ENCODE measurements at regions of chr15 and their contacts with region 1.

Region 1: DNA sequence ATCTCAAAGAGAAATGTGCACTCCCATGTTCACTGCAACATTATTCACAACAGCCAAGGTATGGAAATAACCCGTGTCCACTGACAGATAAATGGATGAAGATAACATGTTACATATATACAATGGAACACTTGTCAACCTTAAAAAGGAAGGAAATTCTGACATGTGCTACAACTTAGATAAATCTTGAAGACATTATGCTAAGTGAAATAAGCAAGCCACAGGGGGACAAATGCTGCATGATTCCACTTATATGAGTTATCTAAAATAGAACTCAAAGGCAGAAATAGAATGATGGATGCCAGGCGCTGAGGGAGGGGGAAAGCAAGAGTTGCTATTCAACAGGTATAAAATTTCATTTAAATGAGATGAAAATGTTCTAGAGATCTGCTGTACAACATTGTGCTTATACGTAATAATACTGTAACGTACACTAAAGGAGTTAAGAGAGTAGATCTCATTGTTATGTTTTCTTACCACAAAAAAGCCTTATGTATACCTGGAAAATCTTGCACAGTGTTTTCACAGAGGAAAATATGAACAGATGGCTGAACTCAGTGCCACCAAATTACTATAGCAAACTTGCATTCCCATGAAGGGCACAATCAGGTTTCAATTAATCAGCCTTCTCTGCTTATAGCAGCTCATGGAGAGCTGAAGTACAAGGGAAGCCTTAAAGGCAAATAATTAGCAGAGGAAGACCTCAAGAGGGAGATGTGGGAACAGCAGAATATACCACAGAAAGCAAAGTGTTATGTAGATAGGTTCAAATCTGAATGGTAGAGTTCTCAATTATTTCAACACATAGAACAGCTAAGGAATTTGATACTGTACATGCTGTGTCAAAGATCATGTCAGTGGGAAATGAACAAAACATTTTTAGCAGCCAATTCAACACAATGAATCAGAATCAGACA is 8.1 kb upstream of the VPS39 start:
- DNase-seq: no peak
- H3K4me3 ChIP-seq: no peak overlapping the region
- H3K27ac ChIP-seq: no peak overlapping the region
- H3K4me1 ChIP-seq: no peaks in the 10 kb centered on the region
- H3K27me3 ChIP-seq: no peaks in the 10 kb centered on the region
- CTCF ChIP-seq: no peak
- POLR2A ChIP-seq: no peak

Region 2: GRCh38 chr15:40412095-40412759 is 1803.9 kb before region 1 on chr15:
- intact Hi-C with region 1: loop called (anchors 10 kb)
- DNase-seq: peak in 1 of 2 donors; percentile 44
- H3K4me3 ChIP-seq: no peak overlapping the region
- H3K27ac ChIP-seq: no peak overlapping the region
- H3K4me1 ChIP-seq: no peaks in the 10 kb centered on the region
- H3K27me3 ChIP-seq: no peaks in the 10 kb centered on the region
- CTCF ChIP-seq: no peak
- POLR2A ChIP-seq: no peak

Region 3: DNA sequence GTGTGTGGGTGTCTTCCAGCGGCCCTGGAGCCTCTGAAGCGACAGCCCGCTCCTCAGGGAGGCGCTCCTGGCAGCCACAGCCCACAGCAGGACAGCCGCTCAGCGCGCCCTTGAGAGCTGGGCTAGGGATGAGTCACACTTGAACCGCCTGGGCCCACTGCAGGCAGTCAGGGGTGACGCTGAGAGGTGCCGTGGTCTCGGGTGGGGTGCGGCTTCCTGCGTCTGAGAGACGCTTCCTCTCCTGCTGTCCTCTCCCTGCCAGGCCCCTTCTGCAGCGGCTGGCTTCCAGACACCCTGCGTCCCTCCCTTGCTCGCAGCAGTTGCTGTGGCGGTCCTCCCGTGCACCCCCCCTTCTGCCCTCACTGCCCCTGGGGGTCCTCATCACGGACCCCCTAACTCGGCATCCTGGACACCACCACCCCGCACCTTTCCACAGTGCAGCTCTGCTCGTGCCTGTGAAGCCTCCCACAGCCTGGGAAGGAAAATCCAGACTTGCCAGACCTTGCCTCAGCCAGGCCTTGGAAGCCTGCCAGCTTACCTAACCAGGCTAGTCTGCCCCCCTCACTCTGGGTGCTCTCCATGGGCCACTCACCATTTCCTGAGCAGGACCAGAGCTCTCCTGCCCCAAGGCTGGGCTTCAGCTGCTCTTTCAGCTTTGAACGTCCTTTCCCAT is 321.2 kb before region 1 on chr15:
- intact Hi-C with region 1: loop called (anchors 10 kb)
- DNase-seq: peak; percentile 66 to 71
- H3K4me3 ChIP-seq: peak overlapping the region; percentile 4 to 46 (median 37)
- H3K27ac ChIP-seq: peak overlapping the region; percentile 65 to 78
- H3K4me1 ChIP-seq: peaks cover 5 to 19% of the 10 kb centered on the region in 2 donors
- H3K27me3 ChIP-seq: no peaks in the 10 kb centered on the region
- CTCF ChIP-seq: no peak
- POLR2A ChIP-seq: no peak